Transverse colon (tissue), 4 donors: ENCODE measurements at regions of chr1 and their contacts with region 1.

Region 1: GRCh38 chr1:84781946-84782771 is 91.9 kb upstream of the SSX2IP start:
- DNase-seq: peak; percentile 68
- H3K4me3 ChIP-seq: no peak overlapping the region
- H3K27ac ChIP-seq: no peak overlapping the region
- H3K4me1 ChIP-seq: peaks cover 0 to 4% (median 2%) of the 10 kb centered on the region in 4 donors
- H3K27me3 ChIP-seq: no peaks in the 10 kb centered on the region
- CTCF ChIP-seq: peak; percentile 40 to 61 (median 50)
- EP300 ChIP-seq: no peak
- POLR2A ChIP-seq: no peak

Region 2: GRCh38 chr1:84541679-84542078 is 240.5 kb before region 1 on chr1:
- in situ Hi-C with region 1: no loop called
- intact Hi-C with region 1: no loop called
- DNase-seq: no peak
- H3K4me3 ChIP-seq: no peak overlapping the region
- H3K27ac ChIP-seq: no peak overlapping the region
- H3K4me1 ChIP-seq: peaks cover 0 to 9% (median 5%) of the 10 kb centered on the region in 4 donors
- H3K27me3 ChIP-seq: no peaks in the 10 kb centered on the region
- CTCF ChIP-seq: peak in 3 of 5 experiments; percentile 6 to 20 (median 10)
- EP300 ChIP-seq: no peak
- POLR2A ChIP-seq: no peak

Region 3: GRCh38 chr1:84928979-84929378 is 146.8 kb after region 1 on chr1:
- in situ Hi-C with region 1: loop called in 1 of 4 experiments (anchors 10 kb)
- intact Hi-C with region 1: no loop called
- DNase-seq: no peak
- H3K4me3 ChIP-seq: no peak overlapping the region
- H3K27ac ChIP-seq: no peak overlapping the region
- H3K4me1 ChIP-seq: no peaks in the 10 kb centered on the region
- H3K27me3 ChIP-seq: no peaks in the 10 kb centered on the region
- CTCF ChIP-seq: no peak
- EP300 ChIP-seq: no peak
- POLR2A ChIP-seq: no peak

Region 4: GRCh38 chr1:85048296-85049064 is 266.3 kb after region 1 on chr1 and contains the start of gene MCOLN3:
- in situ Hi-C with region 1: loop called in 1 of 4 experiments (anchors 25 kb)
- intact Hi-C with region 1: no loop called
- DNase-seq: peak; percentile 56
- H3K4me3 ChIP-seq: peak within 1 kb of the TSS; percentile 16 to 61 (median 44)
- H3K27ac ChIP-seq: no peak within 1 kb of the TSS
- H3K4me1 ChIP-seq: peaks cover 0 to 14% (median 7%) of the 10 kb centered on the region in 4 donors
- H3K27me3 ChIP-seq: peaks cover 79% of the 10 kb centered on the region
- CTCF ChIP-seq: no peak
- EP300 ChIP-seq: no peak
- POLR2A ChIP-seq: no peak
- total RNA-seq, gene MCOLN3: 1.9 to 7.6 TPM in 2 of 4 donors, not detected in the others